ENCODE measurements at regions of chr1 and their contacts with region 1.

Region 1: GRCh38 chr1:151070474-151071276 is at the start of gene GABPB2:
- DNase-seq: peak; percentile 95
- H3K4me3 ChIP-seq: peak within 1 kb of the TSS; percentile 44 to 73 (median 62)
- H3K27ac ChIP-seq: peak within 1 kb of the TSS; percentile 80
- H3K4me1 ChIP-seq: no peaks in the 10 kb centered on the region
- H3K27me3 ChIP-seq: no peaks in the 10 kb centered on the region
- CTCF ChIP-seq: peak; percentile 79 to 99
- POLR2A ChIP-seq: no peak
- total RNA-seq, gene GABPB2: 4.3 and 5.0 TPM in 2 replicates

Region 2: DNA sequence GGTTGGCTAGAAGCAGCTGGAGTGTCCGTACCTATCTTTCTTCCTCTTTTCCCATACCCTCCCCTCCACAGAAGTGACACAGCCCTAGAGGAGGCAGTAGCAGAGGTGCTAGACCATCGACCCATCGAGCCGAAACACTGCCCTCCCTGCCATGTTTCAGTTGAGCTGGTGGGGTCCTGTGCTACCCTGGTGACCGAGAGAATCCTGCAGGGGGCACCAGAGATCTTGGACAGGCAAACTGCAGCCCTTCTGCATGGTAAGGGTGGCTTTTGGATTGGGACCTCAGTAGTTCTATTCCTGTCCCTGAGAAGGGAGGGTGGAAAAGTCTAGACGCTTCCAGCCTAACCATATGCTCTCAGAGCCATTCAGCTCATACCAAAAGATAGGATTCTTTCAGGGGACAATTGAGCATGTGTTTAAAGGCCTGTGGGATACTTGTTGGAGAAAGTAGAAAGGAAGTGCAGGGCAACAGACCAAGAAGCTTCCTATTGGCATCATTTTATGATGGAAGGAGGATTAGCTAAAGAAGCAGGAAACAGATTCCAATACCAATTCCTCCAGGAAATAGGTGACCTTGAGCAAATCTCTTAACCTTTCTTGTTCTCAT is 46.0 kb before region 1 on chr1:
- CTCF ChIA-PET with region 1: interaction called, 10 read pairs
- POLR2A ChIA-PET with region 1: no interaction called
- dilution Hi-C with region 1: no loop called
- intact Hi-C with region 1: loop called (anchors 1 kb)
- DNase-seq: peak; percentile 74
- H3K4me3 ChIP-seq: no peak overlapping the region
- H3K27ac ChIP-seq: no peak overlapping the region
- H3K4me1 ChIP-seq: no peaks in the 10 kb centered on the region
- H3K27me3 ChIP-seq: no peaks in the 10 kb centered on the region
- CTCF ChIP-seq: peak; percentile 76 to 88
- POLR2A ChIP-seq: no peak

Region 3: GRCh38 chr1:151059078-151059907 is 11.4 kb before region 1 on chr1 and contains the start of gene CDC42SE1:
- CTCF ChIA-PET with region 1: interaction called, 39 read pairs
- POLR2A ChIA-PET with region 1: interaction called, 5 read pairs
- dilution Hi-C with region 1: no loop called
- intact Hi-C with region 1: loop called (anchors 1 kb)
- DNase-seq: peak; percentile 87
- H3K4me3 ChIP-seq: peak within 1 kb of the TSS; percentile 82 to 94 (median 91)
- H3K27ac ChIP-seq: peak within 1 kb of the TSS; percentile 91
- H3K4me1 ChIP-seq: peaks cover 33% of the 10 kb centered on the region
- H3K27me3 ChIP-seq: no peaks in the 10 kb centered on the region
- CTCF ChIP-seq: peak; percentile 60 to 88
- POLR2A ChIP-seq: peak; percentile 89
- total RNA-seq, gene CDC42SE1: 85.9 and 92.7 TPM in 2 replicates

Region 4: GRCh38 chr1:151146412-151147140 is 75.9 kb after region 1 on chr1 and contains the start of gene SEMA6C:
- CTCF ChIA-PET with region 1: no interaction called
- POLR2A ChIA-PET with region 1: interaction called, 5 read pairs
- dilution Hi-C with region 1: no loop called
- intact Hi-C with region 1: loop called (anchors 2 kb)
- DNase-seq: peak; percentile 95
- H3K4me3 ChIP-seq: peak within 1 kb of the TSS; percentile 49 to 81 (median 59)
- H3K27ac ChIP-seq: no peak within 1 kb of the TSS
- H3K4me1 ChIP-seq: peaks cover 29% of the 10 kb centered on the region
- H3K27me3 ChIP-seq: no peaks in the 10 kb centered on the region
- CTCF ChIP-seq: no peak
- POLR2A ChIP-seq: peak; percentile 91
- total RNA-seq, gene SEMA6C: 46.2 and 53.0 TPM in 2 replicates

Region 5: DNA sequence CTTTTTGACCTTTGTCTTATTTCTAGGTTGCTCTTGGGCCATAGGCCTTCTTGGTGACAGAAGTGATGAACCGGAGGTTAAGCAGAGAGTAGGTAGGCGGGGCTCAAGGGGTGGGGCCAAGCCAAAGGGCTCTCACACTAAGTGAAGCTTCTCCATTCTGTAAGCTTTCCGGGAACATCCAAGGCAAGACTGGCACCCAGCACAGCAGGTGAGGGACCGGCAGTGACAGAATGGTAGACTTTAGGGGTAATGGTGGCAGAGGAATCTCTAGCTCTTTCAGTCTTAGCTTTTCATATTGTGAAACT is 85.8 kb after region 1 on chr1 and contains the start of gene TNFAIP8L2:
- CTCF ChIA-PET with region 1: interaction called, 13 read pairs
- POLR2A ChIA-PET with region 1: interaction called, 3 read pairs
- dilution Hi-C with region 1: no loop called
- intact Hi-C with region 1: loop called (anchors 1 kb)
- DNase-seq: no peak
- H3K4me3 ChIP-seq: no peak within 1 kb of the TSS
- H3K27ac ChIP-seq: peak within 1 kb of the TSS; percentile 25
- H3K4me1 ChIP-seq: peaks cover 18% of the 10 kb centered on the region
- H3K27me3 ChIP-seq: no peaks in the 10 kb centered on the region
- CTCF ChIP-seq: no peak
- POLR2A ChIP-seq: no peak
- total RNA-seq, gene TNFAIP8L2: not detected in 2 replicates

Region 6: GRCh38 chr1:151165738-151166505 is 95.2 kb after region 1 on chr1 and contains the starts of genes LYSMD1 and SCNM1:
- CTCF ChIA-PET with region 1: interaction called, 5 read pairs
- POLR2A ChIA-PET with region 1: no interaction called
- dilution Hi-C with region 1: no loop called
- intact Hi-C with region 1: loop called (anchors 1 kb)
- DNase-seq: peak; percentile 98
- H3K4me3 ChIP-seq: peak within 1 kb of the TSS; percentile 65 to 89 (median 81)
- H3K27ac ChIP-seq: peak within 1 kb of the TSS; percentile 65
- H3K4me1 ChIP-seq: peaks cover 19% of the 10 kb centered on the region
- H3K27me3 ChIP-seq: no peaks in the 10 kb centered on the region
- CTCF ChIP-seq: no peak
- POLR2A ChIP-seq: peak; percentile 69
- total RNA-seq, gene LYSMD1: 6.4 and 8.2 TPM in 2 replicates
- total RNA-seq, gene SCNM1: 43.1 and 49.0 TPM in 2 replicates

Region 7: DNA sequence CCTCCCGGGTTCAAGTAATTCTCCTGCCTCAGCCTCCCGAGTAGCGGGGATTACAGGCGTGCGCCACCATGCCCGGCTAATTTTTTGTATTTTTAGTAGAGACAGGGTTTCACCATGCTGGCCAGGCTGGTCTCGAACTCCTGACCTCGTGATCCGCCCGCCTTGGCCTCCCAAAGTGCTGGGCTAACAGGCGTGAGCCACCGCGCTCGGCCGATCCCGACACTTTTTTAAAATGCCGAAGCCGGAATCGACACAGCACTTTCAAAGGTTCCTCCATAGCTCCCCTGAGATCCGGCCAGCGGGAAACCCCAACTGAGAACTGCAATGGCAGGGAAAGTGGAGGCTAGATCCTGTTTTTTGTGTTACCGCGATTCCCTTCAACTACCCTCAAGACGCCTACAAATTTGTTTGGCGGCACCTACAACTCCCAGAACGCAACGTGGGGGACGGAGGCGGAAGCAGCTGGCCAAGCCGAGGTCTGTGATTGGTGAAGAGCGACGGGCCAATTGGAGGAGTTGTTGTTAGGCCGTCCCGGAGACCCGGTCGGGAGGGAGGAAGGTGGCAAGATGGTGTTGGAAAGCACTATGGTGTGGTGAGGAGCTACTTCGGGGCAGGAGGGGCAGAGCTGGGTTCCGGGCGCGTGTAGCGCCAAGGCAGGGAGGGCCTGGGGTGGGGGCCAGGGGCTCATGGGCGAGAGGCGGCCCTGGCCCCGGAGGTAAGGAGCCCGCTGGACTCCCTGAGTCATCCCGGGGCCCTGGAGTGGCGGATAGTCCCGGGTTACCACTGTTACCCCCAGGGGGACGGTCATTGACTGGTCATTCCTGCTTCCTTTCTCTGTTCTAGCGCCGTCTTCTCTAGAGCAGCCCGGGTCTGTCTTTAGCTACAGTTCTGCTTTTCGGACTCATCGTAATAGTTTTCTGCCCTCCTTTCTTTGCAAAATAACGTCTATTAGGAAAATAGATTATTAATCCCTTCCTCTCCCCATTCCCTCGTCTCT is 183.8 kb after region 1 on chr1 and contains the start of gene PSMD4:
- CTCF ChIA-PET with region 1: interaction called, 3 read pairs
- POLR2A ChIA-PET with region 1: no interaction called
- dilution Hi-C with region 1: no loop called
- intact Hi-C with region 1: loop called (anchors 1 kb)
- DNase-seq: peak; percentile 98
- H3K4me3 ChIP-seq: peak within 1 kb of the TSS; percentile 82 to 96 (median 87)
- H3K27ac ChIP-seq: peak within 1 kb of the TSS; percentile 80
- H3K4me1 ChIP-seq: peaks cover 7% of the 10 kb centered on the region
- H3K27me3 ChIP-seq: no peaks in the 10 kb centered on the region
- CTCF ChIP-seq: no peak
- POLR2A ChIP-seq: peak; percentile 96
- total RNA-seq, gene PSMD4: 181 and 184 TPM in 2 replicates

Region 8: DNA sequence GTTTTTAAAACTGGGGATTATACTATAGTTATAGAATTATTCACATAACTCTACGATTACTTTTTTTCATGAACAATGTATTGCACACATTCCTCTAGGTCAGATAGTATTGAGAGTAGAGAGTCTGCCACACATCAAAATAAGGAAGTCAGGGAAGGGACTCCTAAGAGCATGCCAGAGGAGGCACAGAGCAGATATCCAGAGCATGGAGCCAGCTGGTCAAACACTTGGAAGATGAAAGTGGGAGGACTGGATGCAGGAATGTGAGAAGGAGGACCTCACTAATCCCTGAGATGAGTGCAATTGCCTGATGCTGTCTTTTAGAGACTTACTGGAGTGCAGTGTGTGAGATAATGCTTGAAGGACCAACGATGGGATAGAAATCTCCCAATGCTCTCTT is 286.0 kb after region 1 on chr1:
- CTCF ChIA-PET with region 1: no interaction called
- POLR2A ChIA-PET with region 1: no interaction called
- dilution Hi-C with region 1: no loop called
- intact Hi-C with region 1: no loop called
- DNase-seq: no peak
- H3K4me3 ChIP-seq: no peak overlapping the region
- H3K27ac ChIP-seq: no peak overlapping the region
- H3K4me1 ChIP-seq: no peaks in the 10 kb centered on the region
- H3K27me3 ChIP-seq: no peaks in the 10 kb centered on the region
- CTCF ChIP-seq: no peak
- POLR2A ChIP-seq: no peak

Region 9: DNA sequence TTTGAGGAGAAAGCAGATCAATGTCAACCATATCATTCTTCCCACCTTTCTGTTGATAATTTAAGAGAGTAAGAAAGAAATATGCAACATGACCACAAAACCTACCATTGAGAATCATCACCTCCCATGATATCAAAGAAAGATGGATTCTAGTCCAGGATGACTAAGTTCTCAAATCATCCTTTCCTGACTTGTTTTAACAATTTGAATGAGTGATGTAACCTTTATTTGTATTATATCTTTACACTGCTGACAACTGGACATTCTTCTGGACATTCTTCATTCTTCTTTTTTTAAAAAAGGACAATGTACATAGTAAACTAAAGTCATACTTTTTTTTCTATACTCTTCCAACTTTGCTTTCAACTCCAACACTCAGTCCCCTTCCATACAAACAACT is 338.2 kb after region 1 on chr1:
- CTCF ChIA-PET with region 1: no interaction called
- POLR2A ChIA-PET with region 1: no interaction called
- dilution Hi-C with region 1: no loop called
- intact Hi-C with region 1: no loop called
- DNase-seq: no peak
- H3K4me3 ChIP-seq: no peak overlapping the region
- H3K27ac ChIP-seq: no peak overlapping the region
- H3K4me1 ChIP-seq: no peaks in the 10 kb centered on the region
- H3K27me3 ChIP-seq: no peaks in the 10 kb centered on the region
- CTCF ChIP-seq: no peak
- POLR2A ChIP-seq: no peak